ENCODE measurements at regions of chr14 and their contacts with region 1.

Region 1: GRCh38 chr14:76151398-76152339 is at the start of gene GPATCH2L:
- DNase-seq: peak; percentile 99
- H3K4me3 Mint-ChIP-seq: peak within 1 kb of the TSS; percentile 88
- H3K27ac Mint-ChIP-seq: peak within 1 kb of the TSS; percentile 99
- H3K4me1 Mint-ChIP-seq: peaks cover 44% of the 10 kb centered on the region
- H3K27me3 Mint-ChIP-seq: peaks cover 5% of the 10 kb centered on the region
- total RNA-seq, gene GPATCH2L: 60.6 and 61.6 TPM in 2 replicates

Region 2: DNA sequence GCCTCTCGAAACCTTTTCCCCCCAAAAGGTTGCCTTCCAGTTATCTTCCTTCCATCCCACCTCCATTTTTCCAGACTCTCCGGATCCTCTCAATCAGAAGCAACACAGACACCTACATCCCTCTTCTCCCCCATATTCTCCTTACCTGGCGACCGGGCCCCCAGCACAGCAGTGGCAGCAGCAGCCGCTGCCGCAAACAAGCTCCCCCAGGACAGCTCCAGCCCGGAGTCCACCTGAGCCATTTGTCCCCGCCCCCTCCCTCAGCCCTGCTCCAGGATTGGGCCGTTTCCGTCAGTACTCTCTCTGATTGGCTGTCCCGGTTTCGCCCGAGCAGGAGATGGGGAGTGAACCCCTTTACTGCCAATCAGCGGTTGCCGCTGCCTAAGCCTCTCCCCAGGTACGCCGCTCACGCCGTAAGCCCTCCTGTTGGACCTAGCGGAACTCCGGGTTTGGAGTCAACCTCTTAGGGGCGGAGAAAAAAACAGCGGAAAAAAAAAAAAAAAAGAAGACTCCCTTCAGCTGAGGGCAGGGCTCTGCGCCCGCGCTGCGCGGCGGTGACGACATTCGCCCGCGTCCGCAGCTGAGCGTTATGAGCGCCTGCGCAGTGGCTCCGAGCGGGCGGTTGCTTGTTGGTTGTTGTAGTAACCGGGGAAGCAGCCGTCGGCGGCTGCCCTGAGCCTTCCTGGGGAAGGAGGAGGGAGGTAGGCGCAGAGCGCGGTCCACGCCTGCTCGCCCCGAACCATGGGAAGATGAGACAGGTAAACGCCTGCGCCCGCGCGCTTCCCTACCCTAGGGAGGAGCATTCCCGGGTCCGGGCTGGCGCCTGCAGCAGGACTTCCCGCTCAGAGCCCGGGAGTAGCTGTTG is 490.8 kb before region 1 on chr14 and contains the starts of genes ERG28 and TTLL5:
- intact Hi-C with region 1: loop called (anchors 5 kb)
- DNase-seq: peak; percentile 99
- H3K4me3 Mint-ChIP-seq: peak within 1 kb of the TSS; percentile 95
- H3K27ac Mint-ChIP-seq: peak within 1 kb of the TSS; percentile 92
- H3K4me1 Mint-ChIP-seq: peaks cover 21% of the 10 kb centered on the region
- H3K27me3 Mint-ChIP-seq: no peaks in the 10 kb centered on the region
- total RNA-seq, gene ERG28: 20.3 and 20.6 TPM in 2 replicates
- total RNA-seq, gene TTLL5: 31.7 and 35.5 TPM in 2 replicates

Region 3: GRCh38 chr14:76203086-76204001 is 51.7 kb after region 1 on chr14:
- intact Hi-C with region 1: no loop called
- DNase-seq: no peak
- H3K4me3 Mint-ChIP-seq: no peak overlapping the region
- H3K27ac Mint-ChIP-seq: peak overlapping the region; percentile 56
- H3K4me1 Mint-ChIP-seq: peaks cover 9% of the 10 kb centered on the region
- H3K27me3 Mint-ChIP-seq: no peaks in the 10 kb centered on the region

Measured in activated CD4-positive, alpha-beta T cell treated with anti-CD3 and anti-CD28 coated beads, Interleukin-2, amount 10 ng/mL, durations not matched to agents 24 days and 14 days (primary cell).